ENCODE measurements at regions of chr5 and their contacts with region 1.

Region 1: GRCh38 chr5:65481635-65482295 is at the start of gene ADAMTS6:
- DNase-seq: peak; percentile 95
- total RNA-seq, gene ADAMTS6: 1.9 TPM

Region 2: DNA sequence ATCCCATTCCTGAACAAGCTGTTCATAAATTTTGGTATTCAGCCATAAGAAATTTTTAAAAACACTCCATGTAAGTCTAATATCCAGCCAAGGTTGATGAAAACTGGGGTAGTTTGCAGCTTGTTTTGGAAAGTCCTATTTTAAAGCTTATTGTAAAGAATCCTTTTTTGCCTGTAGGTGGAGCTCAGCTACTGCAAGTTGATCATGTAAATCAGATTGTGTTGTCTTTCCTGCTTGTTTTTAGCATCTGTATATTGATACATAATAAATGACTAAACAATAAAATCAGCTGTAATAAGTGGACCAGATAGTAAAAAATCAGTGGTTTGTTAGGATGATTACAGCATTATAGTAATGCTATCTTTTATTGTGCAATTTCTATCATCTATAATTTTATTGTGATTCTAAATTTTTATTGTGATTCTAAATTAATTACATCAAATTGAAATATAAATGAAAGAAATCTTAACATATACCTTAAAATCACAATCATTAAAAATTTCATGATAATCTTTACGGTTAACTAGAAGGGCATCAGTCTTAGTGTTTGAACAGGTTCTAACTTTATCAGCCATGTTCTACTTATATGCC is 670.6 kb before region 1 on chr5:
- intact Hi-C with region 1: loop called (anchors 1 kb)
- DNase-seq: no peak

Region 3: GRCh38 chr5:64971513-64971912 is 510.3 kb before region 1 on chr5:
- intact Hi-C with region 1: loop called (anchors 5 kb)
- DNase-seq: no peak

Region 4: GRCh38 chr5:65102828-65103711 is 378.7 kb before region 1 on chr5:
- intact Hi-C with region 1: loop called (anchors 1 kb)
- DNase-seq: peak; percentile 84

Measured in cardiac septum (tissue), 1 donor.